ENCODE measurements at regions of chr11 and their contacts with region 1.

Region 1: GRCh38 chr11:3086114-3086513 is 28.9 kb upstream of the CARS1 start:
- DNase-seq: no peak
- ATAC-seq: no peak
- H3K4me3 ChIP-seq: no peak overlapping the region
- H3K27ac ChIP-seq: no peak overlapping the region
- H3K4me1 ChIP-seq: no peaks in the 10 kb centered on the region
- CTCF ChIP-seq: no peak
- EP300 ChIP-seq: no peak
- POLR2A ChIP-seq: no peak
- RAD21 ChIP-seq: no peak

Region 2: GRCh38 chr11:3073029-3073435 is 13.1 kb before region 1 on chr11:
- CTCF ChIA-PET with region 1: interaction called, 87 read pairs
- POLR2A ChIA-PET with region 1: no interaction called
- DNase-seq: no peak
- ATAC-seq: no peak
- H3K4me3 ChIP-seq: no peak overlapping the region
- H3K27ac ChIP-seq: no peak overlapping the region
- H3K4me1 ChIP-seq: no peaks in the 10 kb centered on the region
- CTCF ChIP-seq: no peak
- EP300 ChIP-seq: no peak
- POLR2A ChIP-seq: no peak
- RAD21 ChIP-seq: no peak